ENCODE measurements at regions of chr1 and their contacts with region 1.

Region 1: DNA sequence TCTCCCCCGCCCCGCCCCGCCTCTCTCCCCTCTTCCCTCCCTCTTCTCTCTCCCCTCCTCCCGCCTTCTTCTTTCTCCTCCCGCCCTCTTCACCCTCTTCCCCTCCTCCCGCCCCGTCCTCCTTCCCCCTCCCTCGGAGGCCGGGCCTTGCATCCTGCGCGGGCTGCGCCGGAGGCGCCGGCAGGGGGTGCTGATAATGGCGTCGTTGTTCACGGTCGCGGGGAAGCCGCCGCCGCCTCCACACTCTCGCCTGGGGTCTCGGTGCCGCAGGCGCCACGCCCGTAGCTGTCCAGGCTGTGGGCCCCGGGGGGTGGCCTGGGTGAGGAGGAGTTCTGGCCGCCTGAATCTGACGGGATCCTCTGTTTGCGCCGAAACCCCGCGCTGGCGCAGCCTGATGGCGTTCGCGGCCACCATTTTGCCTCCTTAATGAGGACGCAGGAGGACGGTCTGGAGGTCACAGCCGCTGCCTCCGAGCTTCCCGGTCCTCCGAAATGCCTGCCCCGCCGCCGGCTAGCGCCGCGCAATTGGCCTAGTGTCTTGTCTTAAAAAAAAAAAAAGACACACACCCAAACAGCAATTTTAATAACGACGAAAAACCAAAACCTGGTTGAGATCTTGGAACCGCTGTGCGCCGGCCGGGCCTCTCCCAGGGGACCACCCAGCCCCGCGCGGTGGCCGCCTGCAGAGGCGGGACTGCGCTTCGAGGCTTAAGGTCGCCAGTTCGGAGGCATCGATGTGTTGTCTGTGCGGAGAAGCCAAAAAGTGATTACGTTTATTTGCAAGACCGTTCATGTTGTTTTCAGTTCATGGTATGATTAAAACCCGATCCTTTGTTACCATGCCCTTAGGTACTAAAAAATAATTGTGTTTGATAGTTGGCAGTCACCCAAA is 106.6 kb upstream of the HNRNPU start:
- DNase-seq: peak; percentile 98
- H3K4me3 ChIP-seq: peak overlapping the region; percentile 86
- H3K27ac ChIP-seq: peak overlapping the region; percentile 99
- H3K4me1 ChIP-seq: peaks cover 15% of the 10 kb centered on the region
- H3K27me3 ChIP-seq: no peaks in the 10 kb centered on the region
- CTCF ChIP-seq: peak; percentile 73

Region 2: GRCh38 chr1:244552340-244552739 is 418.6 kb before region 1 on chr1:
- CTCF ChIA-PET with region 1: no interaction called
- POLR2A ChIA-PET with region 1: no interaction called
- intact Hi-C with region 1: no loop called
- DNase-seq: no peak
- H3K4me3 ChIP-seq: no peak overlapping the region
- H3K27ac ChIP-seq: no peak overlapping the region
- H3K4me1 ChIP-seq: no peaks in the 10 kb centered on the region
- H3K27me3 ChIP-seq: no peaks in the 10 kb centered on the region
- CTCF ChIP-seq: no peak

Region 3: DNA sequence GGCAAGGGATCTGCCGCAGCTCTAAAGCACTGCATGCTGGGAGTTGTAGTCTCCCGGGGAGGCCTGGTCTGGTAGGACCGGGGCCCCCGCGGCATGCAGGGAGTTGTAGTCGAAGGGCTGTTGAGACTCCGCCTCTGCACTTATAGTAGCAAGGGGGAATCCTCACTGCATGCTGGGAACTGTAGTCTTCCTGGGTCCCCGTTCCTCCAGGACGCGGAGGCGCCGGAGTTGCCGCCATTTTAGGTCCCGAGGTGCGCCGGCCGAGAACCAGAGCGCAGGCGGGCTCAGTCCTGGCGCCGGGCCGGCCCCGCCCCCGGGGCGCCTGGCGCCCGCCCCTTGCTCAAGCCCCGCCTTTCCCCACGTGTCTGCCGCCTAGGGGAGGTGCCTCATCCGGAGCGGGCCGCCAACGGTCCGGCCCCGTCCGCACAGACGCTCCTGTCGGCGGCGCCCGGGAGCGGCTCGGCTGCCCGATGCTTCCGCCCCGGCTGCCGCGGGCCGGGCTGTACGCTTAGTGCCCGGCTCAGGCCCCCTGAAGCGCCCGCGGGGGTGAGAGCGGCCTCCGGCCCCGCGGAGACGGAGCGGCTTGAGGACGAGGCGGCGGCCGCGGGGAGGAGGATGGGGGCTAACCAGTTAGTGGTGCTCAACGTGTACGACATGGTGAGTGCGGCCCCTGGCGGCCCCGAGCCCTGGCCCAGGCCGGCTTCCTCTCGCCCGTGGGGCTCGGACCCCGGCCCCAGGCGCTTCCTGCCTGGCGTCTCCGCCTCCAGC is 318.0 kb before region 1 on chr1 and contains the start of gene DESI2:
- CTCF ChIA-PET with region 1: no interaction called
- POLR2A ChIA-PET with region 1: no interaction called
- intact Hi-C with region 1: loop called (anchors 10 kb)
- DNase-seq: peak; percentile 99
- H3K4me3 ChIP-seq: peak within 1 kb of the TSS; percentile 91
- H3K27ac ChIP-seq: peak within 1 kb of the TSS; percentile 94
- H3K4me1 ChIP-seq: peaks cover 17% of the 10 kb centered on the region
- H3K27me3 ChIP-seq: no peaks in the 10 kb centered on the region
- CTCF ChIP-seq: peak; percentile 54
- total RNA-seq, gene DESI2: 40.7 and 47.7 TPM in 2 replicates

Region 4: GRCh38 chr1:244835276-244836134 is 135.4 kb before region 1 on chr1 and contains the start of gene COX20:
- CTCF ChIA-PET with region 1: interaction called, 6 read pairs
- POLR2A ChIA-PET with region 1: no interaction called
- intact Hi-C with region 1: loop called (anchors 1 kb)
- DNase-seq: peak; percentile 95
- H3K4me3 ChIP-seq: peak within 1 kb of the TSS; percentile 72
- H3K27ac ChIP-seq: peak within 1 kb of the TSS; percentile 97
- H3K4me1 ChIP-seq: peaks cover 23% of the 10 kb centered on the region
- H3K27me3 ChIP-seq: no peaks in the 10 kb centered on the region
- CTCF ChIP-seq: no peak
- total RNA-seq, gene COX20: 48.0 and 59.0 TPM in 2 replicates

Region 5: GRCh38 chr1:244864253-244865027 is 106.5 kb before region 1 on chr1 and contains the start of gene HNRNPU:
- CTCF ChIA-PET with region 1: no interaction called
- POLR2A ChIA-PET with region 1: no interaction called
- intact Hi-C with region 1: loop called (anchors 1 kb)
- DNase-seq: peak; percentile 98
- H3K4me3 ChIP-seq: peak within 1 kb of the TSS; percentile 82
- H3K27ac ChIP-seq: peak within 1 kb of the TSS; percentile 99
- H3K4me1 ChIP-seq: peaks cover 21% of the 10 kb centered on the region
- H3K27me3 ChIP-seq: no peaks in the 10 kb centered on the region
- CTCF ChIP-seq: peak; percentile 36; the same call in 1 of the 2 replicates
- total RNA-seq, gene HNRNPU: 720 and 746 TPM in 2 replicates

Measured in A673 (cell line).